ENCODE measurements at regions of chr12 and their contacts with region 1.

Region 1: GRCh38 chr12:99767809-99768208 is 120.3 kb downstream of the GARIN6 start:
- DNase-seq: no peak
- ATAC-seq: no peak

Region 2: GRCh38 chr12:99043319-99043914 is 724.4 kb before region 1 on chr12:
- intact Hi-C with region 1: loop called (anchors 10 kb)
- DNase-seq: peak; percentile 75
- ATAC-seq: no peak

Region 3: DNA sequence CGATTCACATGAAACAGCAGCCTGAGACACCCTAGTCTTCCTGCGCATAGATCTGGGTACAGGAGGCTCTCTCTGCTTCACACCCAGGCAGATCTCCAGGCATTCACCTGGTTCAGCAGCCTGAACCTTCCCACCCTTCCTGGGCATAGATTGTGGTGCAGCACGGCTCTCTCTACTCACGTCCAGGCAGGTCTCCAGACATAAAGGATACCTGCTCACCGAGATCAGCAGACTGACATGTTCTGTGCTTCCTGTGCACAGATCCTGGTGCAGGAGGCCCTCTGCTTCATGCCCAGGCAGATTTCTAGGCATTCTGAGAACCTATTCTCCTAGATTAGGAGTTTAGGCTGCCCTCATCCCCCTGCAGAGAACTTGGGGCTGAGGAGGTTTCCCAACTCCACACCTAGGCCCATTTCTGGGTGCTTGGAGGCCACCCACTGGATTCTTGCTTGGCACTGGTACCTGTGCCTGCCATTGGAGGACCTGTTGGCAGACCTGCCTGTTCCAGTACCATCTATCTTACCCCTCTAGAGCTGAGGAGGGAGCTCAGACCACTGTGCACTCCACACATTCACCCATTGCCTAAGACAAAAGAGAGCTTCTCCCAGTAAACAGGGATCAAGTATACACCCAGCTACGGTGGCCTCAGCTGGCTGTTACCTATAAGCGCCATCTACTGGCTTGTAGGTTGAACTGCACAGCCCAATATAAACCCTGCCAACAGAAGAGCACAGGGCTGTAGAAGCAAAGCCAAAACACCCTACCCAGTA is 148.2 kb before region 1 on chr12:
- intact Hi-C with region 1: no loop called
- DNase-seq: no peak
- ATAC-seq: no peak

Measured in left ventricle myocardium superior (tissue), 1 donor.